Lower leg skin (tissue), 4 donors: ENCODE measurements at regions of chr2 and their contacts with region 1.

Region 1: GRCh38 chr2:169131587-169132512 is 62.5 kb downstream of the DHRS9 start:
- DNase-seq: no peak
- H3K4me3 ChIP-seq: no peak overlapping the region
- CTCF ChIP-seq: no peak
- POLR2A ChIP-seq: no peak

Region 2: DNA sequence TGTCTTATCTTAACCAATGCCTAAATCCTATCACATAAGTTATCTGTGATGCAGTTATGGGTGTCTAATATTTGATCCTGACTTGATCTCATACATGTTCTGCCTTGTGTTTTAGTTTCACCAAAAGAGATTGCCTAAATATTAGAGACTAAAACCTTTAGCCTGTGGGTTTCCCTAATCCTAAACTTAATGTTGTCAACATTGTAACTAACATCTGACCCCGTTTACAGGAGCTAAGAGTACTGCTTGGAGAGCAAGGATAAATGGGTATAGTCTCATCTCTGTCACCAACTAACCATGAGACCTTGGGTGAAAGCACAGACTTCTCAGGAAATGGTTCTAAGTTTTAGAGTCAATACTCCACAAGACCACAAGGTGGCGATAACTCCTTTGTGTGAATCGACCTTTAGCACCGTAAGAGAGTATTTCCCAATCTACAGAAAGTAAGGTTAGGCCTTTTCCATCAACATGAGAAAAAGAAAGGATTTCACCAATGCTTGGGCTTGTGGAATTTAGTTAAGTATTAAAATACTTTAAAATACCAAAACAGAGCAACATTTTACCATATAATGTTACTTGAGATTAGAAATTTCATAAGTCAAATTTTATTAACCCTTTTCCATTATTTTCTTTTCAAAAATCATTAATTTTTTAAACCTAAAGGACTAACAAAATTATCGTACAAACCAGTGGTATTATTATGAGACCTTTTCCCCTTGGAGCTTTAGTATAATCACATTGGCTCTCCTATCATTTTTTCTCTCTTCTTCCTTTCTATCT is 170.2 kb before region 1 on chr2:
- intact Hi-C with region 1: loop called (anchors 5 kb)
- DNase-seq: peak in 1 of 2 donors; percentile 37
- H3K4me3 ChIP-seq: no peak overlapping the region
- CTCF ChIP-seq: peak in 1 of 3 donors; percentile 48
- POLR2A ChIP-seq: no peak

Region 3: GRCh38 chr2:169159686-169160085 is 27.8 kb after region 1 on chr2:
- intact Hi-C with region 1: no loop called
- DNase-seq: no peak
- H3K4me3 ChIP-seq: no peak overlapping the region
- CTCF ChIP-seq: no peak
- POLR2A ChIP-seq: no peak